ENCODE measurements at regions of chr3 and their contacts with region 1.

Region 1: DNA sequence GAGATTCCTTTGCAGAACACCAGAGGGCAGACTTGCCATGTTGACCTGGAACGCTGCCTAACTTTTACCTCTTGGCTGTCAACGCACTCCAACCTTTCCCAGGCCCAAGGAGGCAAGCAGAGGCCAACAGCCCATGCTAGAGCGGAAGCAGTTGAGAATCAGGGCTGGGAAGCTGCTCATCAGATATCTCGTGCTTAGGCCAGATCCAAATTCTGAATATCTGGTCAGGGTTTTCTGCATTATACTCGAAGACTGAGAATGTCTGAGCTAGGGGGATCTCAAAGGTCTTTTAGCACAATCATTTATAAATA is 2.5 kb downstream of the XIRP1 start:
- DNase-seq: peak; percentile 44
- ATAC-seq: peak; percentile 87
- H3K4me3 Mint-ChIP-seq: no peak overlapping the region
- H3K27ac Mint-ChIP-seq: no peak overlapping the region
- H3K4me1 Mint-ChIP-seq: peaks cover 18% of the 10 kb centered on the region
- H3K27me3 Mint-ChIP-seq: no peaks in the 10 kb centered on the region
- CTCF ChIP-seq: no peak

Region 2: GRCh38 chr3:39051647-39052561 is 138.0 kb before region 1 on chr3 and contains the starts of genes SCN11A and WDR48:
- CTCF ChIA-PET with region 1: no interaction called
- POLR2A ChIA-PET with region 1: no interaction called
- intact Hi-C with region 1: no loop called
- DNase-seq: peak; percentile 80
- ATAC-seq: peak; percentile 94
- H3K4me3 Mint-ChIP-seq: peak within 1 kb of the TSS; percentile 97
- H3K27ac Mint-ChIP-seq: peak within 1 kb of the TSS; percentile 98
- H3K4me1 Mint-ChIP-seq: peaks cover 39% of the 10 kb centered on the region
- H3K27me3 Mint-ChIP-seq: no peaks in the 10 kb centered on the region
- CTCF ChIP-seq: no peak
- total RNA-seq, gene SCN11A: 0.16 and 0.20 TPM in 2 replicates
- total RNA-seq, gene WDR48: 47.7 and 48.9 TPM in 2 replicates

Region 3: DNA sequence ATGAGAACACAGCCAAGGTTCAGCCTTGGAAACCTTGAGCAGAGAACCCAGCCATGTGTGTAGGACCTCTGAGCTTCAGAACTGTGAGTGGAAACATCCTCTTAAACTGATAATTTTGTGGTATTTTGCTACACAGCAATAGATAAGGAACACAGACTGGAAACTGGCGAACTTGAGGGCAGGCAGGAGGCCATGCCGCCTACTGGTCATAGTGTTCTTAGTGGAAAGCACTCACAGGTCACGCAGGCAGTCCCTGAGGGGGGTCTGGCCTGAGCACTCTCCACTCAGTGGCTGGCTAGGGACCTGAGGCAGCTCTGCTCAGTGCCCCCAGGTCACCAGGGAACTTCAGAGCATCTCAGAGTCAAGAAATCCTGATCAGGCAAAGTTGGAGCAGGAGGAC is 12.2 kb after region 1 on chr3:
- CTCF ChIA-PET with region 1: interaction called, 40 read pairs
- POLR2A ChIA-PET with region 1: interaction called, 4 read pairs
- intact Hi-C with region 1: no loop called
- DNase-seq: no peak
- ATAC-seq: no peak
- H3K4me3 Mint-ChIP-seq: no peak overlapping the region
- H3K27ac Mint-ChIP-seq: no peak overlapping the region
- H3K4me1 Mint-ChIP-seq: no peaks in the 10 kb centered on the region
- H3K27me3 Mint-ChIP-seq: peaks cover 19% of the 10 kb centered on the region
- CTCF ChIP-seq: no peak

Region 4: DNA sequence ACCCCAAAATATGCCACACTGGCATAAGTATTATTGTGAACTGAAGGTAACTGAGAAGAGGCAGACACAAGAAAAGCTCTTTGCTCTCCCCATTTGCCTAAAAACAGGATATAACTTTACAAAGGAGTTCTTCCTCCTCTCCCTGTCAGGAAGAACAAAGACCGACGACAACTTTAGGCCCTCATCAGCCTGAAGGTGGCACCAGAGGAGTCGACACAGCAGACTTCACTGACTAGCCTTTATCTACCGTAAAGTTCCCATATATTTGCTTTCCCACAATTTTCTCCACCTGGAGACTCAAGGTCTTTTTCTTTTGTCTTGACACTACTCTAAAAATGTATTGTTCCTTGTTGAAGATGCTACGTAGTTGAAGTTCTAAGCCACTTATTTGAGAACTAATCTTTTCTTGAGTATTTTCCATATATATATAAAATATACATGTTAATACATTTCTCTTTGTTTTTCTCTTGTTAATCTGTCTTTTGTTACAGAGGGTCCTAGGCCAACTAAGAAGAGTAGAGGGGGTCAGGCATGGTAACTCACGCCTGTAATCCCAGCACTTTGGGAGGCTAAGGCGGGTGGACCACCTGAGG is 18.6 kb after region 1 on chr3:
- CTCF ChIA-PET with region 1: interaction called, 40 read pairs
- POLR2A ChIA-PET with region 1: interaction called, 3 read pairs
- intact Hi-C with region 1: loop called (anchors 1 kb)
- DNase-seq: no peak
- ATAC-seq: peak; percentile 58
- H3K4me3 Mint-ChIP-seq: no peak overlapping the region
- H3K27ac Mint-ChIP-seq: no peak overlapping the region
- H3K4me1 Mint-ChIP-seq: peaks cover 8% of the 10 kb centered on the region
- H3K27me3 Mint-ChIP-seq: peaks cover 4% of the 10 kb centered on the region
- CTCF ChIP-seq: peak; percentile 18

Region 5: DNA sequence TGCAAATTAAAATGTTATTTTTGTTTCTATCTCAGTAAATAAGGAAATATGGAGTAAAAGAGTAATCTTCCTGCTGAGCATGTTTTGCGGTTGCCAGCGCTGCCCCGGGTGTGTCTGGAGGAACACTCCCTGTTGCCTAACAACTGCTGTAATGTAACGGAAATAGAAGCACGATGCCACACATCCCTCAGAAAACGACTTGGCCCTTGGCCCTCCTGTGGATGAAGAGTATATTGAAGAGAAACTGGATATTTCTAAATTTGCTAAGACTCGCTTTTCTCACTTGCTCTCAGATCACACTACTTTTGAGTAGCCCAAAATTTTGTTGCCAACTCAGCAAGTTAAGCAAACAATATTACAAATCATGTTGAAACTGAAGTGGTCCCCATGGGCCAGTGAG is 71.0 kb after region 1 on chr3:
- CTCF ChIA-PET with region 1: interaction called, 16 read pairs
- POLR2A ChIA-PET with region 1: interaction called, 3 read pairs
- intact Hi-C with region 1: loop called (anchors 1 kb)
- DNase-seq: no peak
- ATAC-seq: peak; percentile 62
- H3K4me3 Mint-ChIP-seq: peak overlapping the region; percentile 52
- H3K27ac Mint-ChIP-seq: peak overlapping the region; percentile 43
- H3K4me1 Mint-ChIP-seq: peaks cover 76% of the 10 kb centered on the region
- H3K27me3 Mint-ChIP-seq: no peaks in the 10 kb centered on the region
- CTCF ChIP-seq: no peak

Region 6: DNA sequence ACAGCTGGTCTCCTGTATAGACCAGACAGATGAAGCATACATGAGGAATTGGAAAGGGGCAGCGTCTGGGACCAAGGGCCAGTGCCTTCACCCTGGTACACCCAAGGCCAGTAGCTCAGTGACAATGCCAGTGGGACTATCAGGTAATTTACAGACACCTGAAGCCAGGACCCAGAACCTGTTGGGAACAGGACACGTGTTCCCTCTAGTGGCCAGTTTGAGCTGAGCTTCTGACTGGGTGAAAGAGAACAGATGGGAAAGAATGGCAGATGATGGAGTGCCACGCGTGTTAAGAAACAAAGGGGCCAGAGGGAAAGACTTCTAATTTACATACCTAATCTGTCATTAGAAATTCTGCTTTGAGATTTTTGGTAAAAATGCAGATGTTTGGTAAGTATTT is 188.2 kb after region 1 on chr3:
- CTCF ChIA-PET with region 1: interaction called, 15 read pairs
- POLR2A ChIA-PET with region 1: no interaction called
- intact Hi-C with region 1: loop called (anchors 1 kb)
- DNase-seq: no peak
- ATAC-seq: peak; percentile 71
- H3K4me3 Mint-ChIP-seq: no peak overlapping the region
- H3K27ac Mint-ChIP-seq: no peak overlapping the region
- H3K4me1 Mint-ChIP-seq: peaks cover 8% of the 10 kb centered on the region
- H3K27me3 Mint-ChIP-seq: no peaks in the 10 kb centered on the region
- CTCF ChIP-seq: peak; percentile 64